AG04450 (cell line): ENCODE measurements at regions of chr12 and their contacts with region 1.

Region 1: DNA sequence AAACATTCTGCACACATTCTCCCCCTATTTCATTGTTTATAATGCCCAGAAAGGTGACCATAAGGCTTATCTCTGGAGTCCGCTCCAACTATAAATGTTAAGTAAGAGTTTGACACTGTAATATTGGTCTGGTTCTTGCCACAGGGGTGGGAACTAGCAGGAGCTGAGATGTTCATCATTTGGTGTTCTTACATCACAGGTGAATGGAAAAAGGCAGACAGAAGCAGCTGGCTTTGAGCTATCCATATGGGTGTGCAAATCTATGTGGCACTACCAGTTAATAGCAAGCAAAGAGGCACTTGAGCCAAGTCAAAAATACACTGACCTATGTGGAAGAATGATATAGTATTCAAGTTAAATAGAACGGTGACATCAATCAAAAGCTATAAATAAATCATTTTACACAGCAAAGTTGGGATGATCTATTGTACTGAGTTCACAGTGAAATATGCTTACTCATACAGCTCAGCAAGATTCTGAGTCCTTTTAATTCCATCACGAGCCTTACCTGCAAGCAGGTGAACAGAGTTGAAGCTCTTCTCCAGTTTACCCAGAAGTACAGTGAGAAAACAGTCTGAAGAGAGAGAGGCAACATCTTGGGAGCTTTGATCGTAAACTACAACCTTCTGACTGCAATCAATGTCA is 43.2 kb downstream of the DUSP16 start:
- DNase-seq: no peak
- H3K4me3 ChIP-seq: no peak overlapping the region
- H3K27ac ChIP-seq: no peak overlapping the region
- H3K27me3 ChIP-seq: no peaks in the 10 kb centered on the region
- CTCF ChIP-seq: no peak

Region 2: GRCh38 chr12:12533238-12533829 is 13.9 kb after region 1 on chr12:
- CTCF ChIA-PET with region 1: no interaction called
- POLR2A ChIA-PET with region 1: no interaction called
- DNase-seq: no peak
- H3K4me3 ChIP-seq: no peak overlapping the region
- H3K27ac ChIP-seq: no peak overlapping the region
- H3K27me3 ChIP-seq: no peaks in the 10 kb centered on the region
- CTCF ChIP-seq: no peak

Region 3: DNA sequence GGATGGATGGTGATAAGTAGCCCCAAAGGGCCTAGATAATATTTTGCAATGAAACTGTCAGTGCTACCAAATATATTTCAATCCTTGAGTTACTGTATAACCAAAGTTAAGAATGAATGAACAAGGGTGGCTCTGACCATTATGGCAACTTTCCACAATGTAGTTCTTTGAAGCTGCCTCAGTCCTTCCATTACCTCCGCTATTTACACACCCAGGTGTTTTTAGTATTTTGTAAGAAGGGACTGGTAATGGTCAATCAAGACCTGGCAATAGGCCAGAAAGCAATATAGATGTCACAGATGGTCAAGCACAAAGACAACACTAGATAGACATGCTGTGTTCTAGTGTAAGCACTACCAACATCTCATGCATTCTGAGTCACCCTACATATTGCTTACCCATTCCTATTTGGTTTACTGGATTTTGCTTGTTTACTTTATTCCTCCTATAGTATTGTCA is 26.9 kb after region 1 on chr12:
- CTCF ChIA-PET with region 1: interaction called, 12 read pairs
- POLR2A ChIA-PET with region 1: no interaction called
- DNase-seq: no peak
- H3K4me3 ChIP-seq: no peak overlapping the region
- H3K27ac ChIP-seq: no peak overlapping the region
- H3K27me3 ChIP-seq: no peaks in the 10 kb centered on the region
- CTCF ChIP-seq: no peak